ENCODE measurements at regions of chr2 and their contacts with region 1.

Region 1: DNA sequence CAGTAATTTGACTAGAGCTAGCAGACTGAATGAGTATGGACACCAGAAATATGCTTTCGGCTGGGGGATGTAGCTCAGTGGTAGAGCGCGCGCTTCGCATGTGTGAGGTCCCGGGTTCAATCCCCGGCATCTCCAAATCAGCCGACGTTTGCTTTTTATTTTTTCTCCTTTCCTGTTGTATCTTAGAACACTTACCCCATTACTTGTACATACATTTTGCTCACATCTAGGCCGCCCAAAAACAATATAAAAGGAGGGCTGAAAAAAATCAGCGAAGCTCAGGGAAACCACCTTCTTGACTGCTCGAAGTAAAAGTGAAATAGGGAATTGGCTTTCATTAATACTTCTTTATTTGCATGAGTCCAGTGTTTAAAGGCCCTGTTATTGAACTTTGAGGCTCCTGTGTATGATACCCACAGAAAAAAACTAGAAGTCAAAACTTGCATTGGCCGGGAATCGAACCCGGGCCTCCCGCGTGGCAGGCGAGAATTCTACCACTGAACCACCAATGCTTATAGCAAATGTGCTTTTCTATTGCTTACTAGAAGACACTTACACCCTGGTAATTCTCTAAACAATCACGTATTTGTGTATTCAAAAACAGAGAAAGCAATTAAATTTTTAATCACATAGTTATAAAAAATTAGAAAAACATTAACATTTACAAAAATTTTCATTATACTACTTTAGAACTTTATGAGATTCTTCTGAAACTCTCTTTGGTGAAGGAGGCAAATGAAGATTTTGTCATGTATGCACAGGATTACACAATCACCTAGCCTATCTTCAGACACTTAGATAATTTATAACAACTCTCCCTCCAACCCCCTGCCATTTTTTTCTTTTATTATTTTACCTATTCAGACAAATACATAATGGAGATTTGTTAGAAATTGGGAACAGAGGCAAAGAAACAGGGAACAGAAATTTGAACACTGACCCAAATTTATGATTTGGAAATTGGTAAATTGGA is 35.2 kb upstream of the GPD2 start:
- DNase-seq: peak; percentile 77
- H3K4me3 ChIP-seq: peak overlapping the region; percentile 56 to 90 (median 76)
- H3K27ac ChIP-seq: peak overlapping the region; percentile 78
- H3K4me1 ChIP-seq: peaks cover 16% of the 10 kb centered on the region
- H3K27me3 ChIP-seq: no peaks in the 10 kb centered on the region
- CTCF ChIP-seq: no peak

Region 2: GRCh38 chr2:155377266-155377680 is 1023.7 kb before region 1 on chr2:
- CTCF ChIA-PET with region 1: no interaction called
- dilution Hi-C with region 1: no loop called
- in situ Hi-C with region 1: no loop called
- intact Hi-C with region 1: loop called (anchors 5 kb)
- DNase-seq: peak; percentile 5
- H3K4me3 ChIP-seq: no peak overlapping the region
- H3K27ac ChIP-seq: no peak overlapping the region
- H3K4me1 ChIP-seq: no peaks in the 10 kb centered on the region
- H3K27me3 ChIP-seq: no peaks in the 10 kb centered on the region
- CTCF ChIP-seq: peak; percentile 19 to 40

Region 3: GRCh38 chr2:156332534-156333273 is 68.3 kb before region 1 on chr2 and contains the start of gene NR4A2:
- CTCF ChIA-PET with region 1: no interaction called
- dilution Hi-C with region 1: no loop called
- in situ Hi-C with region 1: no loop called
- intact Hi-C with region 1: loop called (anchors 1 kb)
- DNase-seq: peak; percentile 92
- H3K4me3 ChIP-seq: peak within 1 kb of the TSS; percentile 66 to 86 (median 80)
- H3K27ac ChIP-seq: peak within 1 kb of the TSS; percentile 95
- H3K4me1 ChIP-seq: peaks cover 23% of the 10 kb centered on the region
- H3K27me3 ChIP-seq: no peaks in the 10 kb centered on the region
- CTCF ChIP-seq: no peak
- total RNA-seq, gene NR4A2: 0.50 to 1.3 TPM

Region 4: GRCh38 chr2:156341452-156342253 is 59.3 kb before region 1 on chr2:
- CTCF ChIA-PET with region 1: no interaction called
- dilution Hi-C with region 1: loop called (anchors 5 kb)
- in situ Hi-C with region 1: no loop called
- intact Hi-C with region 1: loop called (anchors 1 kb)
- DNase-seq: peak; percentile 94
- H3K4me3 ChIP-seq: peak overlapping the region; percentile 73 to 97 (median 96)
- H3K27ac ChIP-seq: peak overlapping the region; percentile 97
- H3K4me1 ChIP-seq: peaks cover 24% of the 10 kb centered on the region
- H3K27me3 ChIP-seq: no peaks in the 10 kb centered on the region
- CTCF ChIP-seq: no peak

Region 5: GRCh38 chr2:156349605-156350004 is 51.4 kb before region 1 on chr2:
- CTCF ChIA-PET with region 1: no interaction called
- dilution Hi-C with region 1: loop called (anchors 5 kb)
- in situ Hi-C with region 1: no loop called
- intact Hi-C with region 1: no loop called
- DNase-seq: no peak
- H3K4me3 ChIP-seq: no peak overlapping the region
- H3K27ac ChIP-seq: no peak overlapping the region
- H3K4me1 ChIP-seq: peaks cover 15% of the 10 kb centered on the region
- H3K27me3 ChIP-seq: no peaks in the 10 kb centered on the region
- CTCF ChIP-seq: no peak

Region 6: GRCh38 chr2:156435715-156436496 is 34.9 kb after region 1 on chr2 and contains the start of gene GPD2:
- CTCF ChIA-PET with region 1: no interaction called
- dilution Hi-C with region 1: no loop called
- in situ Hi-C with region 1: no loop called
- intact Hi-C with region 1: loop called (anchors 1 kb)
- DNase-seq: peak; percentile 61
- H3K4me3 ChIP-seq: peak within 1 kb of the TSS; percentile 63 to 85 (median 65)
- H3K27ac ChIP-seq: peak within 1 kb of the TSS; percentile 90
- H3K4me1 ChIP-seq: peaks cover 39% of the 10 kb centered on the region
- H3K27me3 ChIP-seq: no peaks in the 10 kb centered on the region
- CTCF ChIP-seq: no peak
- total RNA-seq, gene GPD2: 30.0 to 39.3 TPM

Region 7: GRCh38 chr2:156476850-156477206 is 75.8 kb after region 1 on chr2:
- CTCF ChIA-PET with region 1: no interaction called
- dilution Hi-C with region 1: no loop called
- in situ Hi-C with region 1: no loop called
- intact Hi-C with region 1: loop called (anchors 2 kb)
- DNase-seq: peak; percentile 66
- H3K4me3 ChIP-seq: no peak overlapping the region
- H3K27ac ChIP-seq: peak overlapping the region; percentile 54
- H3K4me1 ChIP-seq: peaks cover 17% of the 10 kb centered on the region
- H3K27me3 ChIP-seq: no peaks in the 10 kb centered on the region
- CTCF ChIP-seq: no peak

Region 8: DNA sequence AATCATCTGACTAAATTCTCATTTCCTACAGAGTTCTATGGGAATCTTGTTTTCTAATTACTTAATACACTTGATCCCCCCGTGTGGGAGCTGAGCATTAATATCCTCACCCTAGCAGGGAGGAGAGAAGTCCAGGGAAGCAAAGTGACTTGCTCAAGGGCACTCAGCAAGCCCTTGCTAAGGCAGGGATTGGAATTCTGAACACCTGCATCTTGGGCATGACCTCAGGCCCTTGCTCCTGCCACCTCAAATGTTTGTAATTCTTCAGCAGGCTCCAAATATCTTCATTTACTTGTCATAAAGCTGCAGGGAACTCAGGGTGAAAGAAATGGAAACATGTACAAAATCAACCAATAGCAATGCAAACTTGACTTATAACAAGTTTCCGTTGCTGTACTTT is 197.6 kb after region 1 on chr2:
- CTCF ChIA-PET with region 1: no interaction called
- dilution Hi-C with region 1: no loop called
- in situ Hi-C with region 1: no loop called
- intact Hi-C with region 1: no loop called
- DNase-seq: no peak
- H3K4me3 ChIP-seq: no peak overlapping the region
- H3K27ac ChIP-seq: no peak overlapping the region
- H3K4me1 ChIP-seq: no peaks in the 10 kb centered on the region
- H3K27me3 ChIP-seq: no peaks in the 10 kb centered on the region
- CTCF ChIP-seq: no peak

Measured in mammary epithelial cell (primary cell).